ENCODE measurements at regions of chr22 and their contacts with region 1.

Region 1: GRCh38 chr22:30289134-30289979 is at the start of gene CASTOR1:
- DNase-seq: peak; percentile 82 to 89 (median 83)
- H3K4me3 ChIP-seq: peak within 1 kb of the TSS; percentile 47 to 66
- H3K4me3 Mint-ChIP-seq: peak within 1 kb of the TSS; percentile 88 to 94 (median 92)
- H3K27ac ChIP-seq: peak within 1 kb of the TSS; percentile 68
- H3K27ac Mint-ChIP-seq: peak within 1 kb of the TSS; percentile 91 to 96 (median 94)
- H3K4me1 ChIP-seq: peaks cover 41% of the 10 kb centered on the region
- H3K4me1 Mint-ChIP-seq: peaks cover 22 to 52% (median 30%) of the 10 kb centered on the region in 4 donors
- H3K27me3 ChIP-seq: no peaks in the 10 kb centered on the region
- H3K27me3 Mint-ChIP-seq: no peaks in the 10 kb centered on the region
- total RNA-seq, gene CASTOR1: 13.7 to 14.9 TPM

Region 2: DNA sequence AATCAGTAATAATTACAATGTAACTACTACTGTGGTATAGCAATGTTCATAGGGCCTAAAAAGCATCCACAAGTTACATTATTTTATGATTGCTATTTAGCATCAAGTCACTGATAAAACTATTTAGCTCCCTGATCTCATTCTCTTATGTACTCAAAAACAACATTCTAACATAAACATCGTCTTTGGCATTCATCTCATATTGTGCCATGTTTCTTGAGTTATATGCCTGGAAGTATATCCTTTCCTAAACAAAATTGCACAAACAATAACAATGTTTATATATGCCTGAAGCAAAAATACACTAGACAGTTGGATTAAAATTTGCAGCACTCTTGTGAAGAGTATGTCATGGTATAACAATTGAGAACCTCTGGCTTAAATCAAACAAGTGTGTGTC is 175.0 kb before region 1 on chr22:
- CTCF ChIA-PET with region 1: interaction called, 254 read pairs
- POLR2A ChIA-PET with region 1: interaction called, 4 read pairs
- intact Hi-C with region 1: no loop called
- DNase-seq: no peak
- H3K4me3 ChIP-seq: no peak overlapping the region
- H3K4me3 Mint-ChIP-seq: no peak overlapping the region
- H3K27ac ChIP-seq: no peak overlapping the region
- H3K27ac Mint-ChIP-seq: no peak overlapping the region
- H3K4me1 ChIP-seq: no peaks in the 10 kb centered on the region
- H3K4me1 Mint-ChIP-seq: no peaks in the 10 kb centered on the region
- H3K27me3 ChIP-seq: no peaks in the 10 kb centered on the region
- H3K27me3 Mint-ChIP-seq: no peaks in the 10 kb centered on the region

Region 3: GRCh38 chr22:30212363-30212995 is 76.9 kb before region 1 on chr22:
- CTCF ChIA-PET with region 1: no interaction called
- POLR2A ChIA-PET with region 1: no interaction called
- intact Hi-C with region 1: no loop called
- DNase-seq: no peak
- H3K4me3 ChIP-seq: no peak overlapping the region
- H3K4me3 Mint-ChIP-seq: no peak overlapping the region
- H3K27ac ChIP-seq: no peak overlapping the region
- H3K27ac Mint-ChIP-seq: peak overlapping the region in 3 of 7 donors; percentile 6 to 50 (median 38)
- H3K4me1 ChIP-seq: peaks cover 3% of the 10 kb centered on the region
- H3K4me1 Mint-ChIP-seq: peaks cover 9 to 21% (median 15%) of the 10 kb centered on the region in 4 donors
- H3K27me3 ChIP-seq: no peaks in the 10 kb centered on the region
- H3K27me3 Mint-ChIP-seq: no peaks in the 10 kb centered on the region

Region 4: GRCh38 chr22:30305519-30305905 is 16.2 kb after region 1 on chr22:
- CTCF ChIA-PET with region 1: interaction called, 218 read pairs
- POLR2A ChIA-PET with region 1: interaction called, 333 read pairs
- intact Hi-C with region 1: loop called (anchors 1 kb)
- DNase-seq: peak; percentile 62 to 72 (median 65)
- H3K4me3 ChIP-seq: peak overlapping the region; percentile 60 to 64
- H3K4me3 Mint-ChIP-seq: peak overlapping the region; percentile 67 to 86 (median 82)
- H3K27ac ChIP-seq: peak overlapping the region; percentile 64
- H3K27ac Mint-ChIP-seq: peak overlapping the region; percentile 81 to 98 (median 95)
- H3K4me1 ChIP-seq: peaks cover 100% of the 10 kb centered on the region
- H3K4me1 Mint-ChIP-seq: peaks cover 74 to 100% (median 91%) of the 10 kb centered on the region in 4 donors
- H3K27me3 ChIP-seq: no peaks in the 10 kb centered on the region
- H3K27me3 Mint-ChIP-seq: no peaks in the 10 kb centered on the region

Region 5: GRCh38 chr22:30340911-30341685 is 51.7 kb after region 1 on chr22:
- CTCF ChIA-PET with region 1: interaction called, 17 read pairs
- POLR2A ChIA-PET with region 1: interaction called, 6 read pairs
- intact Hi-C with region 1: no loop called
- DNase-seq: no peak
- H3K4me3 ChIP-seq: no peak overlapping the region
- H3K4me3 Mint-ChIP-seq: no peak overlapping the region
- H3K27ac ChIP-seq: no peak overlapping the region
- H3K27ac Mint-ChIP-seq: no peak overlapping the region
- H3K4me1 ChIP-seq: peaks cover 22% of the 10 kb centered on the region
- H3K4me1 Mint-ChIP-seq: peaks cover 12 to 18% (median 16%) of the 10 kb centered on the region in 4 donors
- H3K27me3 ChIP-seq: no peaks in the 10 kb centered on the region
- H3K27me3 Mint-ChIP-seq: no peaks in the 10 kb centered on the region

Region 6: GRCh38 chr22:30386960-30387827 is 97.8 kb after region 1 on chr22 and contains the start of gene RNF215:
- CTCF ChIA-PET with region 1: interaction called, 392 read pairs
- POLR2A ChIA-PET with region 1: interaction called, 90 read pairs
- intact Hi-C with region 1: no loop called
- DNase-seq: peak; percentile 66 to 85 (median 79)
- H3K4me3 ChIP-seq: no peak within 1 kb of the TSS
- H3K4me3 Mint-ChIP-seq: peak within 1 kb of the TSS; percentile 63 to 84 (median 79)
- H3K27ac ChIP-seq: no peak within 1 kb of the TSS
- H3K27ac Mint-ChIP-seq: peak within 1 kb of the TSS in 5 of 7 donors; percentile 0 to 94 (median 84)
- H3K4me1 ChIP-seq: peaks cover 13% of the 10 kb centered on the region
- H3K4me1 Mint-ChIP-seq: peaks cover 9 to 15% (median 11%) of the 10 kb centered on the region in 4 donors
- H3K27me3 ChIP-seq: no peaks in the 10 kb centered on the region
- H3K27me3 Mint-ChIP-seq: peaks cover 0 to 2% of the 10 kb centered on the region in 2 donors
- total RNA-seq, gene RNF215: 6.1 to 6.6 TPM

Region 7: DNA sequence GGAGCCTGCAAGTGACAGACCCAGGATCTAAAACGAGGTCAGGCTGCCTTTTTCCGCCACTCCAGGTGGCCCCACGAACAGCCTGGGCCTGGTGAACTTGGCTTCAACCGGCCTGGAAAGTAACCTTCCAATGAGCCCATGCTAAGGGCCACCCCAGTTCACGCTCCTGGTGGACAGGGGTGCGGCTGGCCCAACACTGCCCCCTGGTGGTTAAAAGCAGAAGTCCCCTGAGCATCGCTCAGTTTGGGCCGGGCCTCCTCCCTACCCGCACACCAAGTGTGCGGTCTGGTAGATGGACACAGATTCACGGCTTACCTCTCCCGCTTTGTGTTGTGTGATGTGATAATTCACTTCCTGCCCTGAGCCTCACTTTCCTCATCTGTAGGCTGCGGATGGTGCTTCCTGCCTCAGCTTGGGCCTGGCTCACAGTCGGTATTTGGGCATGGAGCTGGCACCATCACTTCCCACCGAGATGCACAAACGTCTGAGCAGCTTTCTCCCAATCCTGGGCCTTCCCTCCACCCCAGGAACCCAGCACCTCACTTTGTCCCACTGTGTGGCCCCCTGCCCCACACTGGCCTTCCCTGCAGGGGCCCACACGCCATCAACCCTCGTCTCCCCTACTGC is 196.1 kb after region 1 on chr22:
- CTCF ChIA-PET with region 1: interaction called, 8 read pairs
- POLR2A ChIA-PET with region 1: interaction called, 4 read pairs
- intact Hi-C with region 1: loop called (anchors 2 kb)
- DNase-seq: peak; percentile 70 to 77 (median 71)
- H3K4me3 ChIP-seq: no peak overlapping the region
- H3K4me3 Mint-ChIP-seq: no peak overlapping the region
- H3K27ac ChIP-seq: no peak overlapping the region
- H3K27ac Mint-ChIP-seq: peak overlapping the region in 2 of 7 donors; percentile 47 to 73
- H3K4me1 ChIP-seq: no peaks in the 10 kb centered on the region
- H3K4me1 Mint-ChIP-seq: peaks cover 0 to 3% (median 0%) of the 10 kb centered on the region in 4 donors
- H3K27me3 ChIP-seq: no peaks in the 10 kb centered on the region
- H3K27me3 Mint-ChIP-seq: peaks cover 1 to 4% of the 10 kb centered on the region in 2 donors